ENCODE measurements at regions of chr1 and their contacts with region 1.

Region 1: DNA sequence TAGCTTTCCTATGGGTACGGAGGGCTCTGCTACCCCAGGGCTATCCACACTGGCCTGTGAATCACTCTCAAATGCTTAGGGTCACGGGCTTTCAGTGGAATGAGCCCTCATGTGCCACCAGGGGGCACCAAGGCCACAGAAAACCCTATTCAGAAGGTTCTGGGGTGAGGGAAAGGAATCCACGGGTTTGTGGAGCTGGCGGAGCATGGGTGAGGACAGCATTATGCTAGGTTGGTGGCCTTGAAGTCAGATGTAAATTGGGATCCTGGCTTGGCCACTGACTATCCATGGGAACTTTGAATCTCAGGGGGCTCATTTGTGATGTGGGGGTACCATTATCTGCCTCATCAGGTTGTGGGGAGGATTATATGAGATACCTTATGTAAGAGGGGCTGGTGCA is 5.1 kb upstream of the LAMTOR5 start:
- DNase-seq: peak; percentile 80 to 90 (median 84)
- H3K4me3 ChIP-seq: no peak overlapping the region
- H3K27ac ChIP-seq: no peak overlapping the region
- H3K4me1 ChIP-seq: peaks cover 2 to 18% (median 11%) of the 10 kb centered on the region in 4 experiments
- H3K27me3 ChIP-seq: no peaks in the 10 kb centered on the region

Region 2: GRCh38 chr1:110384581-110385321 is 27.8 kb before region 1 on chr1:
- CTCF ChIA-PET with region 1: interaction called, 11 read pairs
- POLR2A ChIA-PET with region 1: no interaction called
- DNase-seq: peak; percentile 14 to 57 (median 39)
- H3K4me3 ChIP-seq: no peak overlapping the region
- H3K27ac ChIP-seq: peak overlapping the region in 1 of 2 experiments; percentile 47
- H3K4me1 ChIP-seq: peaks cover 14 to 19% (median 15%) of the 10 kb centered on the region in 4 experiments
- H3K27me3 ChIP-seq: no peaks in the 10 kb centered on the region

Region 3: GRCh38 chr1:110433803-110434202 is 21.2 kb after region 1 on chr1:
- CTCF ChIA-PET with region 1: interaction called, 83 read pairs
- POLR2A ChIA-PET with region 1: interaction called, 4 read pairs
- DNase-seq: peak; percentile 49 to 68 (median 65)
- H3K4me3 ChIP-seq: no peak overlapping the region
- H3K27ac ChIP-seq: no peak overlapping the region
- H3K4me1 ChIP-seq: peaks cover 0 to 36% (median 23%) of the 10 kb centered on the region in 4 experiments
- H3K27me3 ChIP-seq: no peaks in the 10 kb centered on the region

Region 4: DNA sequence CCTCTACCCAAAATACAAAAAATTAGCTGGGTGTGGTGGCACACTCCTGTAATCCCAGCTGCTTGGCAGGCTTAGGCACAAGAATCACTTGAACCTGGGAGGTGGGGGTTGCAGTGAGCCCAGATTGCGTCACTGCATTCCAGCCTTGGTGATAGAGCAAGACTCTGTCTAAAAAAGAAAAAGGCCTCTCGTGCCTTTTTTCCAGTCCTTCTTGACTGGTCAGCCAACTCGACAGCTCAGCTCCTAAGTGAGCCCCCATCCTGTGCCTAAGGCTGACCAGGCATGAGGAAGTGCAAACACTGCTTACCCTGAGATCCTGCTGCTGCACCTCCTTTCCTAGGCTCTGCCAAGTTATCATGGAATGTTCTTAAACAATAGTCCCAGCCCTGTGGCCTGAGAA is 28.3 kb after region 1 on chr1:
- CTCF ChIA-PET with region 1: interaction called, 83 read pairs
- POLR2A ChIA-PET with region 1: interaction called, 4 read pairs
- DNase-seq: no peak
- H3K4me3 ChIP-seq: no peak overlapping the region
- H3K27ac ChIP-seq: no peak overlapping the region
- H3K4me1 ChIP-seq: peaks cover 0 to 23% (median 5%) of the 10 kb centered on the region in 4 experiments
- H3K27me3 ChIP-seq: no peaks in the 10 kb centered on the region